Endothelial cell of umbilical vein (primary cell): ENCODE measurements at regions of chr4 and their contacts with region 1.

Region 1: DNA sequence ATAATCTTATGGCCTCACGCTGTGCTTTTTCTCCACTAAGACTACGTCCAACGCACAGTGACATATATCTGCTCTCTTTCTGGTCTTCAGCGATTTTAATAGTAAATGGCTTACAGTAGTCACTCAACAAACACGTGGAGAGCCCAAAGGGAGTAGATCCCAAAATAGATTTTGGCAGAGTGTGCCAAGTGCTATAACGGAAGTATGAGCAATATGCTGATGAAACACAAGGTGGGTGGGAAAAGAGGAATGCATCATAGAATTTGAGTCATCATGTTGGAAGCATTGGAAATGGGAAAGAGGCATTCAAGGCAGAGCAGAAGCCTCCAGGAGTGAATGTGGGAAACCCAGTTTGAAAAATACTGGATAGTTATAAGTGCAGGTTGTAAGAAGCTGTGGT is 129.1 kb upstream of the LDB2 start:
- DNase-seq: peak; percentile 87
- H3K4me3 ChIP-seq: no peak overlapping the region
- H3K27ac ChIP-seq: peak overlapping the region; percentile 48
- H3K4me1 ChIP-seq: peaks cover 33% of the 10 kb centered on the region
- H3K27me3 ChIP-seq: no peaks in the 10 kb centered on the region
- CTCF ChIP-seq: no peak
- POLR2A ChIP-seq: no peak

Region 2: DNA sequence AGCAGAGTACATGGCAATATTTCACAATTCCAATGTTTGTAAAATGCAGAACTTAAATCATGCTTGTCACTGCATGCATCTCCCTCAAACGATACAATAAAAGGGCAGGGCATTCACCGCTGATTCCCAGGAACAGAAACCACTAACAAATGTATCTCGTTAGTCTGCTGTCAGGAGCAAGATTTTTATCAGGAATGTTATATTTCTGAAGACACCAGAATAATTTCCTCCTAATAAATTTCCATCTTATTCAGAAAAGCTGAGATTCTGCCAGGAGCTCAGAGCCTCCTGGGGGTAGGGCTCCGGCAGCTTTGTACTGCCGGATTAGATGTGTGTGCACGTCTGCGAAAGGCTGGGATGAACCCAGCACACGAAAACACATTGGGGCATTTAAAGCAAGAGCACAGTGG is 75.0 kb before region 1 on chr4:
- CTCF ChIA-PET with region 1: no interaction called
- POLR2A ChIA-PET with region 1: no interaction called
- dilution Hi-C with region 1: no loop called
- intact Hi-C with region 1: no loop called
- DNase-seq: peak; percentile 23
- H3K4me3 ChIP-seq: no peak overlapping the region
- H3K27ac ChIP-seq: no peak overlapping the region
- H3K4me1 ChIP-seq: no peaks in the 10 kb centered on the region
- H3K27me3 ChIP-seq: no peaks in the 10 kb centered on the region
- CTCF ChIP-seq: no peak
- POLR2A ChIP-seq: no peak

Region 3: GRCh38 chr4:17013382-17014006 is 14.0 kb before region 1 on chr4:
- CTCF ChIA-PET with region 1: interaction called, 14 read pairs
- POLR2A ChIA-PET with region 1: interaction called, 3 read pairs
- dilution Hi-C with region 1: no loop called
- intact Hi-C with region 1: no loop called
- DNase-seq: peak; percentile 80
- H3K4me3 ChIP-seq: no peak overlapping the region
- H3K27ac ChIP-seq: no peak overlapping the region
- H3K4me1 ChIP-seq: peaks cover 24% of the 10 kb centered on the region
- H3K27me3 ChIP-seq: no peaks in the 10 kb centered on the region
- CTCF ChIP-seq: no peak
- POLR2A ChIP-seq: no peak

Region 4: DNA sequence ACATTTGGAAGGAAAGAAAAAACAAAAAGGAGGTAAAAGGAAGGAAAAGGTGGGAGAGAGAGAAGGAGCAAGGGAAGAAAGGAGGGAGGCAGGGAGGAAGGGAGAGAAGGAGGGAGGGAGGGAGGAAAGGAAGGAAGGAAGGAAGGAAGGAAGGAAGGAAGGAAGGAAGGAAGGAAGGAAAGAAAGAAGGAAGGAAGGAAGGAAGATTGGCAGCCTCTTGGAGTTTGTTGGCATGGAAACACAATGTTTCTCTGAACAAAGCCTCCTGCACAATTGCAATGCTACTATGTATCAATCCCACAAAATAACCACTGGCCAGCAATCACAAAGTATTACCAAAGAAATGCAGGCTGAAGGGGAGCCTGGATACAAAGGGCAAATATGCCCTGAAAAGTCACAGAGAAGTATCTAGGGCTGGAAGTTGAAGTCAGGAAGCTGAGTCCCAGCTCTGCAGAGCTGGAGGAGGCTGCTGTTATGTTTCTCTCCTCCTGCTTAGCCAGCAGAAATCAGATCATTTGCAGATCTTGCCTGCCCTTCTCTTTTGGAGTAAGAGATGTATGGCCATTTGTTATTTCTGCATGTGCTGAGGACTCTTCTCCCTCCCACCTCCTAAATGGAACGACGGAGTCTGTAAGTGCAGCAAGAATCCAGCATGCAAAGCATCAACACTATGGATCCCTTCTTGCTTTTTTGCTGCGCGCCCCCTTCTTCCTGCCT is 66.8 kb after region 1 on chr4:
- CTCF ChIA-PET with region 1: no interaction called
- POLR2A ChIA-PET with region 1: no interaction called
- dilution Hi-C with region 1: no loop called
- intact Hi-C with region 1: no loop called
- DNase-seq: peak; percentile 35
- H3K4me3 ChIP-seq: no peak overlapping the region
- H3K27ac ChIP-seq: no peak overlapping the region
- H3K4me1 ChIP-seq: no peaks in the 10 kb centered on the region
- H3K27me3 ChIP-seq: peaks cover 0 to 9% of the 10 kb centered on the region in 2 experiments
- CTCF ChIP-seq: no peak
- POLR2A ChIP-seq: no peak

Region 5: GRCh38 chr4:17142232-17142711 is 114.8 kb after region 1 on chr4:
- CTCF ChIA-PET with region 1: interaction called, 3 read pairs
- POLR2A ChIA-PET with region 1: no interaction called
- dilution Hi-C with region 1: no loop called
- intact Hi-C with region 1: loop called (anchors 5 kb)
- DNase-seq: peak; percentile 78
- H3K4me3 ChIP-seq: no peak overlapping the region
- H3K27ac ChIP-seq: no peak overlapping the region
- H3K4me1 ChIP-seq: peaks cover 16% of the 10 kb centered on the region
- H3K27me3 ChIP-seq: no peaks in the 10 kb centered on the region
- CTCF ChIP-seq: no peak
- POLR2A ChIP-seq: no peak